ENCODE measurements at regions of chr19 and their contacts with region 1.

Region 1: GRCh38 chr19:8321060-8321985 is at the starts of genes NDUFA7 and RPS28:
- DNase-seq: peak; percentile 98
- ATAC-seq: peak; percentile 96
- H3K4me3 ChIP-seq: peak within 1 kb of the TSS; percentile 78 to 99 (median 96)
- H3K4me3 Mint-ChIP-seq: peak within 1 kb of the TSS; percentile 92
- H3K27ac ChIP-seq: peak within 1 kb of the TSS; percentile 80 to 92
- H3K27ac Mint-ChIP-seq: peak within 1 kb of the TSS; percentile 91
- H3K4me1 ChIP-seq: peaks cover 18 to 39% of the 10 kb centered on the region in 2 donors
- H3K4me1 Mint-ChIP-seq: peaks cover 42% of the 10 kb centered on the region
- H3K27me3 ChIP-seq: no peaks in the 10 kb centered on the region
- H3K27me3 Mint-ChIP-seq: no peaks in the 10 kb centered on the region
- CTCF ChIP-seq: peak; percentile 41
- total RNA-seq, gene NDUFA7: 23.2 and 28.6 TPM in 2 replicates
- total RNA-seq, gene RPS28: 2,435 and 2,579 TPM in 2 replicates

Region 2: GRCh38 chr19:8158411-8159074 is 162.8 kb before region 1 on chr19:
- CTCF ChIA-PET with region 1: interaction called, 6 read pairs
- POLR2A ChIA-PET with region 1: interaction called, 3 read pairs
- intact Hi-C with region 1: loop called (anchors 1 kb)
- DNase-seq: peak; percentile 87
- ATAC-seq: peak; percentile 65
- H3K4me3 ChIP-seq: no peak overlapping the region
- H3K4me3 Mint-ChIP-seq: peak overlapping the region; percentile 33
- H3K27ac ChIP-seq: no peak overlapping the region
- H3K27ac Mint-ChIP-seq: peak overlapping the region; percentile 73
- H3K4me1 ChIP-seq: peaks cover 6 to 15% of the 10 kb centered on the region in 2 donors
- H3K4me1 Mint-ChIP-seq: peaks cover 24% of the 10 kb centered on the region
- H3K27me3 ChIP-seq: peaks cover 0 to 14% (median 2%) of the 10 kb centered on the region in 4 experiments
- H3K27me3 Mint-ChIP-seq: peaks cover 14% of the 10 kb centered on the region
- CTCF ChIP-seq: peak; percentile 82

Region 3: DNA sequence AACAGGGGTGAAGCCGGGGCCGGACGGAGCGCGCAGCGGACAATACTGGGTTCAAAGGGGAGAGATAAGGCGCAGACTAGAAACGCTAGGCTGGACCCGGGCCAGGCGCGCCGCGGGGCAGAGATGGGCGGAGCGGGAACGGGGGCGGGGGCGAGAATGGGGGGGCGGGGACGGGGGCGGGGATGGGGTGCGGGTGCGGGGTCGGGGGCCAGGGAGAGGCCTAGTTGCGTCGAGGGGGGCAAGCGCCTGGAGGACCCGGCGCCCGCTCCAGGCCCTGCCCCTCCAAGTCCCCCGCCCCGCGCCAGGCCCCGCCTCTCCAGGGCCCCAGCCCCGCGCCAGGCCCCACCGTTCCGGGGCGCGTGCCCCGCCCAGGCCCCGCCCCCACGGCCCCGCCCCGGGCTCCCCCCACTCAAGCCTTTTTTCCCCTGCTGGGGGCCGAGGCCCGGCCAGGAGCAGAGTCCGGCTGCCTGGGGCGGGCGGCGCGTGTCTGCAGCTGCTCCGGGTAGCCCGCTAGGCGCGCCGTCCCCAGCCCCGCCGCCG is 112.3 kb before region 1 on chr19 and contains the start of gene CERS4:
- CTCF ChIA-PET with region 1: no interaction called
- POLR2A ChIA-PET with region 1: interaction called, 12 read pairs
- intact Hi-C with region 1: no loop called
- DNase-seq: no peak
- ATAC-seq: peak; percentile 85
- H3K4me3 ChIP-seq: peak within 1 kb of the TSS; percentile 48 to 96 (median 93)
- H3K4me3 Mint-ChIP-seq: peak within 1 kb of the TSS; percentile 94
- H3K27ac ChIP-seq: peak within 1 kb of the TSS; percentile 87 to 98
- H3K27ac Mint-ChIP-seq: peak within 1 kb of the TSS; percentile 93
- H3K4me1 ChIP-seq: peaks cover 29 to 37% of the 10 kb centered on the region in 2 donors
- H3K4me1 Mint-ChIP-seq: peaks cover 41% of the 10 kb centered on the region
- H3K27me3 ChIP-seq: no peaks in the 10 kb centered on the region
- H3K27me3 Mint-ChIP-seq: no peaks in the 10 kb centered on the region
- CTCF ChIP-seq: no peak
- total RNA-seq, gene CERS4: 125 and 146 TPM in 2 replicates

Region 4: GRCh38 chr19:8262431-8262830 is 58.9 kb before region 1 on chr19:
- CTCF ChIA-PET with region 1: interaction called, 7 read pairs
- POLR2A ChIA-PET with region 1: no interaction called
- intact Hi-C with region 1: loop called (anchors 1 kb)
- DNase-seq: no peak
- ATAC-seq: no peak
- H3K4me3 ChIP-seq: no peak overlapping the region
- H3K4me3 Mint-ChIP-seq: no peak overlapping the region
- H3K27ac ChIP-seq: no peak overlapping the region
- H3K27ac Mint-ChIP-seq: no peak overlapping the region
- H3K4me1 ChIP-seq: no peaks in the 10 kb centered on the region
- H3K4me1 Mint-ChIP-seq: no peaks in the 10 kb centered on the region
- H3K27me3 ChIP-seq: no peaks in the 10 kb centered on the region
- H3K27me3 Mint-ChIP-seq: no peaks in the 10 kb centered on the region
- CTCF ChIP-seq: no peak

Region 5: GRCh38 chr19:8307965-8308866 is 13.1 kb before region 1 on chr19 and contains the start of gene CD320:
- CTCF ChIA-PET with region 1: interaction called, 8 read pairs
- POLR2A ChIA-PET with region 1: interaction called, 4 read pairs
- intact Hi-C with region 1: loop called (anchors 1 kb)
- DNase-seq: peak; percentile 94
- ATAC-seq: peak; percentile 91
- H3K4me3 ChIP-seq: peak within 1 kb of the TSS; percentile 44 to 68 (median 66)
- H3K4me3 Mint-ChIP-seq: peak within 1 kb of the TSS; percentile 93
- H3K27ac ChIP-seq: peak within 1 kb of the TSS in 1 of 2 donors; percentile 49
- H3K27ac Mint-ChIP-seq: peak within 1 kb of the TSS; percentile 87
- H3K4me1 ChIP-seq: peaks cover 7 to 18% of the 10 kb centered on the region in 2 donors
- H3K4me1 Mint-ChIP-seq: peaks cover 24% of the 10 kb centered on the region
- H3K27me3 ChIP-seq: no peaks in the 10 kb centered on the region
- H3K27me3 Mint-ChIP-seq: no peaks in the 10 kb centered on the region
- CTCF ChIP-seq: no peak
- total RNA-seq, gene CD320: 28.7 and 30.5 TPM in 2 replicates

Region 6: DNA sequence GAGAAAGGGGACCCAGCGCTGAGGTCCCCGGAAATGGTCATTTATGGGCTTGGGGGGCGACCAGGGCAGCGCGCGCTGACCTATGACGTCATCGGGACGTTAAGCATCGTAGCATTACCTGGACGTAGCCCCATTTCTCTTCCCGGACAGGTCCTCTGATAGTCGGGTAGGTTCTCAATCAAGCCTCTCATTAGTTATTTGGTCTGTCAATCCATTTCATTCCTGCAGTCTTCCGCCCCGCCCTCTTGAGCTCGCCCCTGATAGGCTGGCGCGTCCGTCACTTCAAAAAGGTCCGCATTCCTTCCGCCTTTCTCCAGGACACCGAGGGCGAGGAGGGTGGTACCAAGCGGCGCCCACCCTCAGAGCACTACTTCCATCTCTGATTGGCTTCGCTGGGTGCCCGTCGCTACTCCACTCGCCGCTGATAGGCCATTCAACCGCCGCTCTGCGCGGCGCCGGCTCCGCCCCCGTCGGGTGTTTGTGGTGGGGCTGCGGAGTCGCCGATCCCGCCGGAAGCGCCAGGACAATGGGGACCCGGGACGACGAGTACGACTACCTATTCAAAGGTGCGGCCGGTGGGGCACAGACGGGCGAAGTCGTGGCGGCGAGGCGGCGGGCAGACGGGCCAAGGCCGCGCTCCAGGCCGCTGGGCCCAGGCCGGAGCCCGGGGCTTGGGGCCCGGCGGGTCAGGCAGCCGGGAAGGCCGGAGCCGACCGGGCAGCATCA is 68.7 kb after region 1 on chr19 and contains the start of gene RAB11B:
- CTCF ChIA-PET with region 1: no interaction called
- POLR2A ChIA-PET with region 1: interaction called, 4 read pairs
- intact Hi-C with region 1: loop called (anchors 1 kb)
- DNase-seq: peak; percentile 100
- ATAC-seq: peak; percentile 86
- H3K4me3 ChIP-seq: peak within 1 kb of the TSS; percentile 54 to 89 (median 82)
- H3K4me3 Mint-ChIP-seq: peak within 1 kb of the TSS; percentile 95
- H3K27ac ChIP-seq: peak within 1 kb of the TSS; percentile 70 to 96
- H3K27ac Mint-ChIP-seq: peak within 1 kb of the TSS; percentile 98
- H3K4me1 ChIP-seq: peaks cover 10 to 20% of the 10 kb centered on the region in 2 donors
- H3K4me1 Mint-ChIP-seq: peaks cover 29% of the 10 kb centered on the region
- H3K27me3 ChIP-seq: no peaks in the 10 kb centered on the region
- H3K27me3 Mint-ChIP-seq: no peaks in the 10 kb centered on the region
- CTCF ChIP-seq: no peak
- total RNA-seq, gene RAB11B: 126 and 130 TPM in 2 replicates

Region 7: DNA sequence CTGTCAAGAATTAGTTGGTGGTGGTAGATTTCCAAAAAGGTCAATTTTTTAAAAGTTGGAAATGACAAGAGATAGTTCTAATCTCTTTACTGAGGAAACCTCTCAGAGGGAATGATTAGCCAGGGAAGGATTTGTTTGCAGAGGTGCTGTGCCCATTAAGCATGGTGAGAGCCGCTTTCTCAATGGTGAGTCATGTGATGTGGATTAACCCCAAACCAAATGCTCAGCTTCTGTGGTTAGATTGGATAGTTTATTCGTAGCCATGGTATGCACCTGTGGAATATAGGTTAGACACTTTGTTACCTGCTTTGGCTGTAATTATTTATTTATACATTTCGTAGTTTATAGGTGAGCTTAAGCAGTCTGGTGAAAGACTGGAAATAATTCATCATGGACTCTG is 130.6 kb after region 1 on chr19:
- CTCF ChIA-PET with region 1: no interaction called
- POLR2A ChIA-PET with region 1: no interaction called
- intact Hi-C with region 1: no loop called
- DNase-seq: no peak
- ATAC-seq: no peak
- H3K4me3 ChIP-seq: no peak overlapping the region
- H3K4me3 Mint-ChIP-seq: peak overlapping the region; percentile 30
- H3K27ac ChIP-seq: no peak overlapping the region
- H3K27ac Mint-ChIP-seq: peak overlapping the region; percentile 44
- H3K4me1 ChIP-seq: peaks cover 57 to 72% of the 10 kb centered on the region in 2 donors
- H3K4me1 Mint-ChIP-seq: peaks cover 79% of the 10 kb centered on the region
- H3K27me3 ChIP-seq: no peaks in the 10 kb centered on the region
- H3K27me3 Mint-ChIP-seq: no peaks in the 10 kb centered on the region
- CTCF ChIP-seq: no peak